Pancreas (tissue), 10 donors: ENCODE measurements at regions of chr18 and their contacts with region 1.

Region 1: DNA sequence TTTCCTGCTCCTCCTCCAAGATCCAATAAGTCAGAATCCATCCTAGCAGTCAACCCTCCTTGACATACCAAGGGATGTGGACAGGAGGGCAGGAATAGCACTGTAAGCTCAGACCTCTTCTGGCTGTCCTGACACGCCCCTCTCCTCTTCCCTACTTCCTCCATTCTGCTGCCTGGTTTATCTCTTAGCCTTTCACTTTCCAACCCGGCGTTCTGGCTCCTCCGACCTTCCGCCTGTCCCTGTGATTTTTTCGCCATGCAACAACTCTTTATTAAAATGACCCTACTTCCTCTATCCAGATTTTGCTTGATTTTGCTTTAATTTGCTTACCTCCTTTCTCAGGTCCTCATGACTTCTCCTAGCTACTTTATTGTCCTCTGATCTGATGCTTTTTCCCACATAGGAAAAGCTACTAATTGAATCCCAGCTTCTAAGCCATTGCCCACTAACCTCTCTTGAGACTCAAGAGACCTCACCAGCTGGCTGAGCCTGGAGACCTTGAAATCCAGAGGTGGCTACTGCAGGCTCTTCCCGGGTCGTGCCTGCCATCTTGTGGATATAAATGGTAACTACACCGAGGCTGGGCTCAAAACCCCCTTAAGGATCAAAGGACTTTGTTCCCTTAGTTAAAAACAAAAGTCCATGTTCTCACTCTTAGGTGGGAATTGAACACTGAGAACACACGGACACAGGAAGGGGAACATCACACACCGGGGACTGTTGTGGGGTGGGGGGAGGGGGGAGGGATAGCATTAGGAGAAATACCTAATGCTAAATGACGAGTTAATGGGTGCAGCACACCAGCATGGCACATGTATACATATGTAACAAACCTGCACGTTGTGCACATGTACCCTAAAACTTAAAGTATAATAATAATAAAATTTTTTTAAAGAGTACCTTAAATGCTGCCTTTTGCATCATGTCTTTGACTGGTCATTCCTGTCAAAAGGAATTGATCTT is 139.4 kb downstream of the AKAIN1 start:
- DNase-seq: peak; percentile 33 to 66 (median 60)
- ATAC-seq: peak; percentile 60 to 98 (median 92)
- H3K4me3 ChIP-seq: no peak overlapping the region
- H3K27ac ChIP-seq: no peak overlapping the region
- H3K4me1 ChIP-seq: no peaks in the 10 kb centered on the region
- H3K27me3 ChIP-seq: peaks cover 0 to 3% (median 0%) of the 10 kb centered on the region in 4 donors
- CTCF ChIP-seq: peak; percentile 69 to 77 (median 74)

Region 2: GRCh38 chr18:4106407-4107033 is 951.1 kb before region 1 on chr18:
- intact Hi-C with region 1: loop called in 1 of 3 experiments (anchors 10 kb)
- DNase-seq: peak in 4 of 6 donors; percentile 25 to 81 (median 60)
- ATAC-seq: peak; percentile 48 to 86 (median 81)
- H3K4me3 ChIP-seq: no peak overlapping the region
- H3K27ac ChIP-seq: no peak overlapping the region
- H3K4me1 ChIP-seq: no peaks in the 10 kb centered on the region
- H3K27me3 ChIP-seq: no peaks in the 10 kb centered on the region
- CTCF ChIP-seq: peak; percentile 67 to 76 (median 75)

Region 3: GRCh38 chr18:4831791-4832375 is 225.8 kb before region 1 on chr18:
- intact Hi-C with region 1: no loop called
- DNase-seq: no peak
- ATAC-seq: no peak
- H3K4me3 ChIP-seq: no peak overlapping the region
- H3K27ac ChIP-seq: no peak overlapping the region
- H3K4me1 ChIP-seq: no peaks in the 10 kb centered on the region
- H3K27me3 ChIP-seq: no peaks in the 10 kb centered on the region
- CTCF ChIP-seq: no peak

Region 4: DNA sequence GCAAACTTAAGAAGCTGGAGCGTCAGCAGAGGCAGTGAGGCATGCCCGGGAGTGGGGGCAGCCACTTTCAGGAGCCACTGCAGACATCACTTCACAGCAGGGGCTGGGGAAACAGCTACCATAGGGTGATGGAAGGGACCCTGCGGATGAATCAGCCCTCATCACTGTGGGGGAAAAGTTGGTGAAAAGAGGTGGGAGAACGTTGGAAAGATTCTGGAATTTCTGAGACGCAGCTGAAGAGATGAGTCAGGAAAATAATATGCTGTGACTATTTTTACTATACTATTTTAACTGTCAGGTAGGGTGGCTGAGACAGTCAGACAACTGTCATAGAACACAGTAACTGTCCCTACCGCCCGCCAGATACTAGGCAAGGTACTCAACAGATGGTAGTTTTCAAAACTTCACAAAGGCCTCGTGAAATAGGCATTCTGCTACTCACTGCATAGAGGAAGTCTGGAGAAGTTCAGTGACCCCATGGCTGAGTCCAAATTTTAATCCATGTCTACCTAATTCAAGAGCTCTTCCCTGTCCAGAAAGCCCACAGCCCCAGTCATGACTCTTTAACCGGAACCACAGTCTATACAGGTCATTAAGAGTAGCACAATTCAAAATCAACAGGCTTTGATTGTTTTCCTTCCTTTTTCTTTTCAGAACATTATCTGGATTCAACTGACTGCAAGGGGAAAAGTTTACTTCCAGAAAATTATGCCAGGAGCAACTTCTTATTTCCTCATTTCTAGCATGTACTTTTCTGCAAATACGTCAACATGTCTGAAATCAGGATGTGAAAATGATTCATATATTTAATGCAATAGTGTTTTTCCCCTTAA is 525.4 kb after region 1 on chr18:
- intact Hi-C with region 1: no loop called
- DNase-seq: peak in 1 of 6 donors; percentile 25
- ATAC-seq: peak in 2 of 4 donors; percentile 71 to 75
- H3K4me3 ChIP-seq: no peak overlapping the region
- H3K27ac ChIP-seq: peak overlapping the region in 1 of 4 donors; percentile 36
- H3K4me1 ChIP-seq: no peaks in the 10 kb centered on the region
- H3K27me3 ChIP-seq: no peaks in the 10 kb centered on the region
- CTCF ChIP-seq: no peak